PC-9 (cell line): ENCODE measurements at regions of chr1 and their contacts with region 1.

Region 1: GRCh38 chr1:219973213-219973612 is 44.9 kb upstream of the SLC30A10 start:
- DNase-seq: no peak
- H3K4me3 ChIP-seq: no peak overlapping the region
- H3K27ac ChIP-seq: no peak overlapping the region
- H3K4me1 ChIP-seq: no peaks in the 10 kb centered on the region
- H3K27me3 ChIP-seq: no peaks in the 10 kb centered on the region
- CTCF ChIP-seq: no peak

Region 2: DNA sequence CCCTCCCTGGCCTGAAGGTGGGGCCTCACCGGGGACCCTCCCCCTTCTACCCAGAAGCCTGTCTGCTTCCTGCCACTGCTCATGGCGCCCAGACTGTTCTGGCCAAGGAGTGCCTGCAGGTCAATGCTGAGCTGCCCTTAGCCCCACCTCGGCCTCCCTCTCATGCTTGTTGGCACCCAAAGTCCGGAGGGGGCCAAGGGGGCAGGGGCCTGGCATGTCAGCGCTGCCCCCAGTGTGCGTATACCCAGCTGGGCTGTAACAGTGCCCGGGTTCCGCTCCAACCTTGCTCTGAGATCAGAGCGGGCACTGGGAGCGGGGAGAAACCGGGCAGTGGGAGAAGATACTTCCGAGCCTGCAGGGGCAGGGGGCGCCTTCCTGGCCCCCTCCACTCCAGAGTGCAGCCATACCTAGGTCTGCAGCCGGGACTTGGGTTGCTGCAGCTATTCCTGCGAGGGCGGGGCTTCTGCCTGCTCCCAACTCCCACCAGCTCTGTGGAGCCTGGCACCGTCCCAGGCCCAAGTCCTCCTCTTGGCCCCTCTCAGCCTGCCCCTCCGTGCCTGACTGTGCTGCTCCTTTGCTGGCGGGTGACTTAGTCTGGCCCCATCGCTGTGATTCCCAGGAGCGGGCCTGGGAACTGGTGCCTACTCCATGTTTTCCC is 1649.5 kb before region 1 on chr1:
- CTCF ChIA-PET with region 1: no interaction called
- POLR2A ChIA-PET with region 1: no interaction called
- intact Hi-C with region 1: loop called (anchors 10 kb)
- DNase-seq: no peak
- H3K4me3 ChIP-seq: no peak overlapping the region
- H3K27ac ChIP-seq: no peak overlapping the region
- H3K4me1 ChIP-seq: no peaks in the 10 kb centered on the region
- H3K27me3 ChIP-seq: no peaks in the 10 kb centered on the region
- CTCF ChIP-seq: no peak

Region 3: DNA sequence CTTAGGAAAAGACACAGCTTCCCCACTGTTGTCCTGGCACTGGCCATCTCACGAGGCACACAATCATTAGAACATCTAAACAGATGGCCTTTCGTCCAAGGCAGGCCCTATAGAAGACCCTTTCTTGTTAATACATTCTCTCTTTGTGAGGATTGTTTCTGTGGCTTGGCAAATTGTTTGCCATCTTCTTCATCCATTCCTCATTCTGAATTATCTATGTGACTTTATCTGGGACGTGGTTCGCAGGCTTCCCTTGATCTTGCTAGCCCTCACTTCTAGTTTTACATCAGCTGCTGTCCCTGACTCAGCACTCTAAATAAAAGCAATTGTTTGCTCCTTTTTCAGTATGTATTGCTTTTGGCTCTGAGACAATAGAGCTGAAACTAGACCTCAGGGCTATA is 259.2 kb before region 1 on chr1:
- CTCF ChIA-PET with region 1: no interaction called
- POLR2A ChIA-PET with region 1: no interaction called
- intact Hi-C with region 1: no loop called
- DNase-seq: no peak
- H3K4me3 ChIP-seq: no peak overlapping the region
- H3K27ac ChIP-seq: no peak overlapping the region
- H3K4me1 ChIP-seq: no peaks in the 10 kb centered on the region
- H3K27me3 ChIP-seq: no peaks in the 10 kb centered on the region
- CTCF ChIP-seq: no peak

Region 4: GRCh38 chr1:219837274-219837993 is 135.8 kb before region 1 on chr1:
- CTCF ChIA-PET with region 1: no interaction called
- POLR2A ChIA-PET with region 1: no interaction called
- intact Hi-C with region 1: loop called (anchors 5 kb)
- DNase-seq: peak in 1 of 2 experiments; percentile 8
- H3K4me3 ChIP-seq: no peak overlapping the region
- H3K27ac ChIP-seq: no peak overlapping the region
- H3K4me1 ChIP-seq: no peaks in the 10 kb centered on the region
- H3K27me3 ChIP-seq: no peaks in the 10 kb centered on the region
- CTCF ChIP-seq: peak; percentile 81

Region 5: GRCh38 chr1:219917851-219918466 is 55.3 kb before region 1 on chr1:
- CTCF ChIA-PET with region 1: no interaction called
- POLR2A ChIA-PET with region 1: no interaction called
- intact Hi-C with region 1: no loop called
- DNase-seq: peak; percentile 9 to 88
- H3K4me3 ChIP-seq: no peak overlapping the region
- H3K27ac ChIP-seq: peak overlapping the region; percentile 2; the same call in 1 of the 2 replicates
- H3K4me1 ChIP-seq: 0 out of 2 replicates have a peak, but pooled peaks cover 3% of the 10 kb centered on the region
- H3K27me3 ChIP-seq: no peaks in the 10 kb centered on the region
- CTCF ChIP-seq: no peak